T-cell (primary cell): ENCODE measurements at regions of chr16 and their contacts with region 1.

Region 1: GRCh38 chr16:4556112-4556511 is at the start of gene C16orf96:
- DNase-seq: no peak
- ATAC-seq: no peak
- H3K4me3 ChIP-seq: no peak within 1 kb of the TSS
- H3K4me3 Mint-ChIP-seq: no peak within 1 kb of the TSS
- H3K27ac ChIP-seq: no peak within 1 kb of the TSS
- H3K27ac Mint-ChIP-seq: no peak within 1 kb of the TSS
- H3K4me1 ChIP-seq: no peaks in the 10 kb centered on the region
- H3K4me1 Mint-ChIP-seq: no peaks in the 10 kb centered on the region
- H3K27me3 ChIP-seq: peaks cover 0 to 18% of the 10 kb centered on the region in 2 experiments
- H3K27me3 Mint-ChIP-seq: no peaks in the 10 kb centered on the region
- total RNA-seq, gene C16orf96: 0.30 to 0.66 (median 0.50) TPM

Region 2: GRCh38 chr16:4544473-4544872 is 11.6 kb before region 1 on chr16:
- CTCF ChIA-PET with region 1: interaction called in 1 of 2 experiments, 14 read pairs
- POLR2A ChIA-PET with region 1: no interaction called
- DNase-seq: no peak
- ATAC-seq: no peak
- H3K4me3 ChIP-seq: no peak overlapping the region
- H3K4me3 Mint-ChIP-seq: no peak overlapping the region
- H3K27ac ChIP-seq: no peak overlapping the region
- H3K27ac Mint-ChIP-seq: no peak overlapping the region
- H3K4me1 ChIP-seq: peaks cover 0 to 11% of the 10 kb centered on the region in 2 experiments
- H3K4me1 Mint-ChIP-seq: peaks cover 0 to 7% (median 6%) of the 10 kb centered on the region in 3 donors
- H3K27me3 ChIP-seq: no peaks in the 10 kb centered on the region
- H3K27me3 Mint-ChIP-seq: no peaks in the 10 kb centered on the region